GM10248 (cell line): ENCODE measurements at regions of chr1 and their contacts with region 1.

Region 1: DNA sequence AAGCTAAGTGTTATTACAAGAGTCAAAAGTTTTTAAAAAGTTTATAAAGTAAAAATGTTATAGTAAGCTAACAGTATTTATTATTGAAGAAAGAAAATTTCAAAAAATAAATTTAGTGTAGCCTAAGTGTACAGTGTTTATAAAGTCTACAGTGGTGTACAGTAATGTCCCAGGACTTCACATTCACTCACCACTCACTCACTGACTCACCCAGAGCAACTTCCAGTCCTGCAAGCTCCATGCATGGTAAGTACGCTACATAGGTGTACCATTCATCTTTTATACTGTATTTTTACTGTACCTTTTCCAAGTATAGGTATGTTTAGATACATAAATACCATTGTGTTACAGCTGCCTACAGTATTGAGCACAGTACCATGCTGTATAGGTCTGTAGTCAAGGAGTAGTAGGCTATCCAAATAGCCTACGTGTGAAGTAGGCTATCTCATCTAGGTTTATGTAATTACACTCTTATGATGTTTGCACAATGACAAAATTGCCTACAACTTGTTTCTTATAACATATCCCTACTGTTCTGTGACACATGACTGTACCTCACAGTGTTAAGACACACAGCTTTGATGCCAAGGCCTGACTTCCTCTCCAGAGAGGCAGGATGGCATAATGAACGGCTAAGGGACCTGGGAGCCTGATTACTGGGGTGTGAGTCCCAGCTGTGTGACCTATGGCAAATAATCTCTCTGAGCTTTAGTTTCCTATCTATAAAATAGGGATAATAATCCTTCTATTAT is 12.7 kb downstream of the DHCR24 start:
- DNase-seq: no peak
- CTCF ChIP-seq: no peak

Region 2: DNA sequence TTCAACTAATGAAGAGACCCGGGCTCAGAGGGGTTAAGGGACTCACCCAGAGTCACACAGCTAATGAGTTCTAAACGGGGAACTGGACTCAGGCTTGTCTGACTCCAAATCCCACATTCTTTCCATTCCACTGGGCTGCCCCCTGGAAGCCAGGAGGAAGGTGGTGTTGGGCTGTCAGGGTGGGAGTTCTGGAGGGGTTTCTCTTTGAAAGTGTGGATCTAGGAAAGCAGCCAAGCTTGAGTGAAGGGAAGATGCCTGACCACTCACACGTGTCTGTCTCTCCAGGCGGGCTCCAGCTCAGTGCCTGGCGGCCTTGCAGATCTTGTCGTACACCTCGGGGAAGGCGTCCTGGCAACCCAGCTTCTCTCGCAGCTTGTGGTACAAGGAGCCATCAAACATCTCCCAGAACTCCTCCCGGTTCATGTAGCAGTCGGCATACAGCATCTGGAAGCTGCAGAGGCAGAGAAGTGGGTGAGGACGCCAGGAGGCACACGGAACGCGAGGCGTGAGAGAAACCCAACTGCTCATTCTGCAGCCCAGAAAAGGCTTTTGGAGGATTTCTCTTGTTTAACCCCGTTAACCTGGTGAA is 22.2 kb before region 1 on chr1:
- CTCF ChIA-PET with region 1: no interaction called
- POLR2A ChIA-PET with region 1: no interaction called
- DNase-seq: no peak
- CTCF ChIP-seq: no peak

Region 3: GRCh38 chr1:54886724-54887664 is 12.7 kb after region 1 on chr1 and contains the start of gene DHCR24:
- CTCF ChIA-PET with region 1: interaction called, 17 read pairs
- POLR2A ChIA-PET with region 1: no interaction called
- DNase-seq: peak; percentile 99
- CTCF ChIP-seq: no peak